ENCODE measurements at regions of chr17 and their contacts with region 1.

Region 1: GRCh38 chr17:2386400-2387085 is 14.3 kb downstream of the MNT start:
- DNase-seq: no peak
- ATAC-seq: no peak
- H3K4me3 ChIP-seq: no peak overlapping the region
- H3K27ac ChIP-seq: no peak overlapping the region
- H3K4me1 ChIP-seq: peaks cover 16 to 49% (median 34%) of the 10 kb centered on the region in 9 donors
- H3K27me3 ChIP-seq: no peaks in the 10 kb centered on the region
- CTCF ChIP-seq: no peak

Region 2: DNA sequence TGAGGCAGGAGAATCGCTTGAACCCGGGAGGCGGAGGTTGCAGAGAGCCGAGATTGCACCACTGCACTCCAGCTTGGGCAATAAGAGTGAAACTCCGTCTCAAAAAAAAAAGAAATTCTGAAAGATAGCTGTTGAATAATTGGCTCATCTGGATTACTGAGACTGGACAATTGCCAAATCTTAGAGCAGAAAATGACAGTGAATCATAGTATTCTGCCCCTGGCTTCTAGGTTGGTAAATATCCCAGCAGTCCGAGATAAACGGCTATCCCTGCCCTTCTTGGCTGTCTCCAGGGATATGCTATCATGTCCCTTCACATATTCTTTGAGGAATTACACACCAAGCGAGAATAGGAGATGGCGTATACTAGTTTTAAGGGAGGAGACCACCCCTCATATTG is 160.6 kb after region 1 on chr17:
- intact Hi-C with region 1: no loop called
- DNase-seq: no peak
- ATAC-seq: no peak
- H3K4me3 ChIP-seq: no peak overlapping the region
- H3K27ac ChIP-seq: no peak overlapping the region
- H3K4me1 ChIP-seq: peaks cover 0 to 7% (median 0%) of the 10 kb centered on the region in 9 donors
- H3K27me3 ChIP-seq: peaks cover 0 to 20% (median 0%) of the 10 kb centered on the region in 7 donors
- CTCF ChIP-seq: no peak

Region 3: DNA sequence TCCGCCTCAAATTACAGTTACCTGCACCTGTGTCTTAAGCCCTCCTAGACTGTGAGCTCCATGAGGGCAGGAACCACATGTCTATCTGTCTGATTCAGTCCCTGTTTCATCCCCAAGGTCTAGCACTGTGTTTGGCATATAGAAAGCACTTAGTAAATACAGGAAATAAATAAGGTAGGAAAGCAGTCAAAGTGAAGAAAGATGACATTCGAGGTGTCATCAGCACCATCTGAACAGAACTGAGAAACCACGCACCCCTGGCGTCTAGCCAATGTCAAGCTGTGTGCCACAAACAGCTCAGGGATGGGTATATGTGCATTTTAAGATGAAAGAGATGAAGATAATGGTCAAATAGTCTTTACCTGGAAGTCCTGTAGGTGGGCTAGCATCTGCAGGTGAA is 1657.3 kb after region 1 on chr17:
- intact Hi-C with region 1: loop called in 1 of 10 experiments (anchors 10 kb)
- DNase-seq: peak in 1 of 2 donors; percentile 25
- ATAC-seq: no peak
- H3K4me3 ChIP-seq: no peak overlapping the region
- H3K27ac ChIP-seq: peak overlapping the region in 1 of 10 donors; percentile 58
- H3K4me1 ChIP-seq: no peaks in the 10 kb centered on the region
- H3K27me3 ChIP-seq: no peaks in the 10 kb centered on the region
- CTCF ChIP-seq: no peak